ENCODE measurements at regions of chr16 and their contacts with region 1.

Region 1: DNA sequence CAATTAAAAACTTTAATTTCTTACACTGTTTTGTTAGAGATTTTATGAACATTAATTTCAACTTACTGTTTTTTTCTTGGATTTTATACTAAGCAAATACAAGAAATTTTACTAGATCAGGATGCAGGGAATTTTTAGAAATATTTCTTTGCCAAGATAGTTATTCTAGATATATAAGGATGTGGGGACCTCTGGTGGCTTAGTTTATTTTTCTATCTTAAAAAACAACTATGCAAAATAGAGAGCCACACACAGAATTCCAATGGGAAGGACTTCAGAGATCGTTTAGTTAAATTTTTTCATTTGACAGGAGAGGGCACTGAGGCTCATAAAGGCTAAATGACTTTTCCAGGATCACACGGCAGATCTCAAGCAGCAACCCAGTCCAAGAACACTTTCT is 23.0 kb upstream of the CAPNS2 start:
- DNase-seq: peak; percentile 49
- H3K4me3 Mint-ChIP-seq: no peak overlapping the region
- H3K27ac Mint-ChIP-seq: no peak overlapping the region
- H3K4me1 Mint-ChIP-seq: no peaks in the 10 kb centered on the region
- H3K27me3 Mint-ChIP-seq: no peaks in the 10 kb centered on the region
- CTCF ChIP-seq: peak; percentile 23

Region 2: DNA sequence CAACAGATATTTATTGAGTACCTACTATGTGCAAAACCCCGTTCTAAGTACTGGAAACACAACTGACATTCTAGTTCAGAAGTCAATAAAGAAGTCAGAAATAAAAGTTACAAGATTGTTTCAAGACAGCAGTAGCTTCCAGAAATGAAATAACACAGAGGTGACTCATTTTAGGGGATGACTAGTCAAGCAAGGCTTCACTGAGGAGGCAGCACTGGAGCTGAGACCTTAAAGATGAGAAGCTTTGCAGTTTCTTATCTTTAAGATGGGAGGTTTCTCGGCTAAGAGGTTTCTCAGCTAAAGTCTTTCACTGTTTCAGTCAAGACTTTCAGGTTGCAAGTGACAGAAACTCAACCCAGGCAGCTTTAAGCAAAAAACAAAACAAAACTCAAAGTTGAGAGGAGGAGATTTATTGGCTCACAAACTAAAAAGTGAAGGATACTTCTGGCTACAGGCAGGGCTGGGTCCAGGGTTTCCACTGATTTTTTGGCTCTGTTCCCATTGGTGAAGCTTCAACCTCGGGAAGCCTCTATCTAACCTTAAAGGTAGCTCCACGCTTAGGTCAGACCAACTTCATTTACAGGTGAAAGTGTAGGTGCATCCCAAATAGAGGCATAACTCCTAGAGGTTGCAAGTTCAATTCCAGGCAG is 71.9 kb before region 1 on chr16:
- CTCF ChIA-PET with region 1: interaction called, 122 read pairs
- POLR2A ChIA-PET with region 1: interaction called, 6 read pairs
- intact Hi-C with region 1: no loop called
- DNase-seq: peak; percentile 75
- H3K4me3 Mint-ChIP-seq: peak overlapping the region; percentile 45
- H3K27ac Mint-ChIP-seq: peak overlapping the region; percentile 46
- H3K4me1 Mint-ChIP-seq: peaks cover 27% of the 10 kb centered on the region
- H3K27me3 Mint-ChIP-seq: no peaks in the 10 kb centered on the region
- CTCF ChIP-seq: no peak

Region 3: DNA sequence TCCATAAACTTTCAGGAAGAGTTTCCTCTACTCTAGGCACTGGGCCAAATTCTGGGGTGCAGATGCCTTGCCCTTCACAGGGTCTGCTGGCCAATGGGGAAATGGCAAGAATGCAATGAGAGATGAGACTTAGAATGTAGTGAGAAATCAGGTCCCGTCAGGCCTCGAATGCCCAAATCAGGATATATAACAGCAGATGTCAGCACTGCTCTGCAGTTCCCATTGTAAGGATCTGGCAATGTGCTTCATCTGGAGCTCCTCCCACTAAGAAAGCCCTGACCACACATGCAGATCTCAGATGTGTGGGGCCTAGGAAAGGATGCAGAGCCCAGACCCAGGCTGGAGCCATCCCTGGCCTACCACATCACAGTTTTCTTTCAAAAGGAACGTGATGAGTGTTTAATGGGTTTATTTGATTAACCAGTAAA is 48.5 kb before region 1 on chr16:
- CTCF ChIA-PET with region 1: interaction called, 3 read pairs
- POLR2A ChIA-PET with region 1: no interaction called
- intact Hi-C with region 1: loop called (anchors 1 kb)
- DNase-seq: peak; percentile 71
- H3K4me3 Mint-ChIP-seq: no peak overlapping the region
- H3K27ac Mint-ChIP-seq: no peak overlapping the region
- H3K4me1 Mint-ChIP-seq: peaks cover 27% of the 10 kb centered on the region
- H3K27me3 Mint-ChIP-seq: no peaks in the 10 kb centered on the region
- CTCF ChIP-seq: peak; percentile 40

Region 4: DNA sequence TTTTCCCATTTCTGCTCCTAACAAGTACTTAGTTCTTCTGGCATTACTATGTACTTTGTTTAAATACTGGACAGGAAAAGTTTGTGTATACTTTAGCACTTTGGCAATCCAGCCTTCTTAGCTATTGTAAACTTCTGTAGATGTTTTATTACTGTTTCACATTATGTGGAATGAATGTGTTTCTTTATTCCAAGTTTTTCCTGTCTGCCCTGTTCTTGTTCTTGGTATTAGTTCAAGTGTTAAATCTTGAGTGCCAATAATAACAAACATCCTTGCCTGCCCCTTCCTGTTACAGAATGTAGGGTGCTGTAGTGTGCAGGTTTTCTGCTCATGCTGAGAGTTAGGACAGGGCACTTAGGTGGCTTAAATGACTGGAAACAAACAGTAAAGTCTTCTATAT is 15.8 kb after region 1 on chr16:
- CTCF ChIA-PET with region 1: no interaction called
- POLR2A ChIA-PET with region 1: interaction called, 10 read pairs
- intact Hi-C with region 1: no loop called
- DNase-seq: peak; percentile 69
- H3K4me3 Mint-ChIP-seq: peak overlapping the region; percentile 22
- H3K27ac Mint-ChIP-seq: peak overlapping the region; percentile 32
- H3K4me1 Mint-ChIP-seq: peaks cover 65% of the 10 kb centered on the region
- H3K27me3 Mint-ChIP-seq: no peaks in the 10 kb centered on the region
- CTCF ChIP-seq: no peak

Region 5: DNA sequence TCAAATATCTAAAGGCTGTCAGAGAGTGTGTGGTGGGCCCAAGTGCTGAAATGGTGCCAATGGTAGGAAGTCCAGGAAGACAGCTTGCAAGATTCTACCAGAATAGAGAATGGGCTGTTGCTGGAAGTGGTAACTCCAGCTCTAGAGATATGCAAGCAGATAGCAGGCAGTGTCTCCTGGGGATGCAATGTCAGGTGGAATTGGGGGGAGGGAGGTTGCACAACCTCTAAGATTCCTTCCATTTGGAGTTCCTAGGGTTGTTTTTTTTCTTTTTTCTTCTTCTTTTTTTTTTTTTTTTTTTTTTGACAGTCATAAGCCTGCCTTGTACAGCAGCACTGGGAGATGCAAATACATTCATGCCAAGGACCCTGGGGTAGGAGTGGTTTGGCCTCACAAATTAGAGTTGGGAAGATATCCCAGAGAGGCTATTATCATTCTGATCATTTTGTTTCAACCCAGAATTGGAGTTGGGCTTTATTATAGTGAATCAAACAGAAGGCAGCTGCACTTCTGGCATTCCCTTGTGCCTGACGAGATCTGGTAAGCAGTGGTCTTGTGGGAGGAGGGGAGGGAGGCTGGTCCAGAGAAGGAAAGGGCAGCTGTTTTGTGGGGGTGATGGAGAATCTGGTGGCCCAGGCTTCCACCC is 163.4 kb after region 1 on chr16:
- CTCF ChIA-PET with region 1: interaction called, 69 read pairs
- POLR2A ChIA-PET with region 1: interaction called, 5 read pairs
- intact Hi-C with region 1: loop called (anchors 1 kb)
- DNase-seq: no peak
- H3K4me3 Mint-ChIP-seq: no peak overlapping the region
- H3K27ac Mint-ChIP-seq: no peak overlapping the region
- H3K4me1 Mint-ChIP-seq: no peaks in the 10 kb centered on the region
- H3K27me3 Mint-ChIP-seq: peaks cover 19% of the 10 kb centered on the region
- CTCF ChIP-seq: no peak

Region 6: GRCh38 chr16:55842369-55843104 is 299.1 kb after region 1 on chr16:
- CTCF ChIA-PET with region 1: no interaction called
- POLR2A ChIA-PET with region 1: no interaction called
- intact Hi-C with region 1: loop called (anchors 5 kb)
- DNase-seq: peak; percentile 66
- H3K4me3 Mint-ChIP-seq: no peak overlapping the region
- H3K27ac Mint-ChIP-seq: no peak overlapping the region
- H3K4me1 Mint-ChIP-seq: no peaks in the 10 kb centered on the region
- H3K27me3 Mint-ChIP-seq: peaks cover 19% of the 10 kb centered on the region
- CTCF ChIP-seq: peak; percentile 59